Right cardiac atrium (tissue), 5 donors: ENCODE measurements at regions of chr12 and their contacts with region 1.

Region 1: DNA sequence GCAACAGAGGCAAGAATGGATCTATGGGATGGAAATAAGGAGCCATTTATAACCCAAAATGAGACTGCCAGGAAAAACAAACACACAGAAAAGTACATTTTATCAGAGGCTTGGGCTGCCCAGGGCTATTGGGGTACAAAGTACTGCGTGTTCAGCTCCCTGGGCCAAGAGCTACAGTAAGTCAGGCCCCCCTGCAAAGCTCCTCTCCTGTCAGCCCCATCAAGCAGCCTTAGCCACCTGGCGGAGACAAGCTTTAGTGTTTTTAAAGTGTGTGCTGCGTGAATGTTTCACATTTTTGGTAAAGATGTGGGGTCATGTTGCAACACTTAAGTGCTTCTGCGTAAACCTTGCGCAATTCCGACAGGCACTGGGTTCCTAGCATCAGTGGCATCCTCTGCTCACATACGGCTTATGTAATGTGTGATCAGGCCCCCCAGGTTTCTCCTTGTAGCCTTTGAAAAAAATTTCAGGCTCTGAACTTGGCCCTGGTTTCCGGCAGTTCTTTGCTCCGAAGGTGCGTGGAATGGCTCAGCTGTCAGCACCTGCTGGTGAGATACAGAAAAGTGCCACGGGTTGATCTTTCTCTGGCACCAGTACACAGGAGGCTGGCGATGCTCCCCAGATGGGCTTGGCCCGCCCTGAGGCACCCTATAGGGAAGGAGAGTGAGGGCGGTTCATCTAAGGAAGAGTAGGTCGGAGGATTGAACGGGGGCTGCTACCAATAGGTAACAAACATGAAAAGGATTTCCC is 198.7 kb upstream of the EEA1 start:
- DNase-seq: peak; percentile 69 to 84 (median 81)
- ATAC-seq: peak; percentile 93
- H3K4me3 ChIP-seq: no peak overlapping the region
- H3K27ac ChIP-seq: peak overlapping the region; percentile 60
- H3K4me1 ChIP-seq: peaks cover 5% of the 10 kb centered on the region
- H3K27me3 ChIP-seq: no peaks in the 10 kb centered on the region

Region 2: GRCh38 chr12:93072340-93072739 is 55.4 kb before region 1 on chr12:
- intact Hi-C with region 1: no loop called
- DNase-seq: no peak
- ATAC-seq: no peak
- H3K4me3 ChIP-seq: no peak overlapping the region
- H3K27ac ChIP-seq: no peak overlapping the region
- H3K4me1 ChIP-seq: no peaks in the 10 kb centered on the region
- H3K27me3 ChIP-seq: no peaks in the 10 kb centered on the region

Region 3: GRCh38 chr12:93390549-93391297 is 263.0 kb after region 1 on chr12:
- intact Hi-C with region 1: loop called in 1 of 4 experiments (anchors 10 kb)
- DNase-seq: no peak
- ATAC-seq: peak; percentile 39 to 59
- H3K4me3 ChIP-seq: no peak overlapping the region
- H3K27ac ChIP-seq: peak overlapping the region; percentile 17
- H3K4me1 ChIP-seq: peaks cover 10% of the 10 kb centered on the region
- H3K27me3 ChIP-seq: no peaks in the 10 kb centered on the region